Natural killer cell (primary cell): ENCODE measurements at regions of chr1 and their contacts with region 1.

Region 1: GRCh38 chr1:29793101-29793546 is 556.8 kb downstream of the PTPRU start:
- DNase-seq: peak; percentile 49 to 55
- ATAC-seq: peak; percentile 42 to 72 (median 57)
- H3K4me3 ChIP-seq: no peak overlapping the region
- H3K4me3 Mint-ChIP-seq: no peak overlapping the region
- H3K27ac ChIP-seq: no peak overlapping the region
- H3K27ac Mint-ChIP-seq: no peak overlapping the region
- H3K4me1 ChIP-seq: no peaks in the 10 kb centered on the region
- H3K4me1 Mint-ChIP-seq: no peaks in the 10 kb centered on the region
- H3K27me3 ChIP-seq: no peaks in the 10 kb centered on the region
- H3K27me3 Mint-ChIP-seq: no peaks in the 10 kb centered on the region
- CTCF ChIP-seq: peak; percentile 64

Region 2: DNA sequence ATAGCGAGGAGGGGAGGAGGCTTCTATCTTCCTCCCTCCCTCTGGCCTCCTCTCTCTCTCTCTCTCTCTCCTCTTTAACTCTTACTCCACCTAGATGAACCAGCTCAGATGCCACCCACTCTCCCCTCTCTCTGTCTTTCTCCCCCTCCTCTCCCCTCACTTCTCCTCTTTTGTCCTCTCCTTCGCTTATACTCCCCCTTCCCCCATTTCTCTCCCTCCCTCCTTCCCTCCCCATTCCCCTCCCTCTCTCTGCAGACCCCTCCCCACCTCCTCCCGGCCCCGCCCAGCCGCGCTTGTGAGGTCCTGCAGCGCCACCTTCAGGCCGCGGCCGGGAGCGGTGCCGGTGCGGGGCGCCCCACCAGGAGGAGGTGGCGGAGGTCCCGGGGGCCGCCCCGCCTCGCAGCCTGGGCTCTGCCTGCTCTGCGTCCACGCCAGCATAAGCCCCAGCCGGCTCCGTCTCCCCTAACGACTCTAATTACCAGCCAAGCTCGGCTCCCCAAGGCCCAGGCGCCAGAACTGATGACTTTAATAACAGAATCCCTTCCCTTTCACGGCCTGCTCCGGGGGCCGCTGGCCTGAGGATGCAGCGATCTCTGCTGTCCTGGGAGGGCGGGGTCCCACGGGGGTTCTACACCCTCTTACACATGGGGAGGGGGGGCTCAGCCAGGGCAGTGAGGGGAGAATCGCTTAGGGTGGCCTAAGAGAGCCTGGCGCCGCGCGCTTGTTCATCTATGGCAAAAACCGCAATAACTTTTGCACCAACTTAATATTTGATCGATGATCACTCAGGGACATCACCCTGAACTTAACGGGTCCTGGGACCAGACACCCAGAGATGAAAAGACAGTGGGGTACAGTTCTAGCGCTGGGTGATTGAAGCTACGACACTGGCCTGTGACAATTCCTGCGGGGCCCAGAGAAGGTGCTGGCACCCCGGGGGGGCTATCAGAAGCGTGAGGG is 293.0 kb after region 1 on chr1:
- intact Hi-C with region 1: loop called (anchors 5 kb)
- DNase-seq: peak; percentile 36 to 37
- ATAC-seq: peak in 2 of 3 donors; percentile 54 to 77
- H3K4me3 ChIP-seq: no peak overlapping the region
- H3K4me3 Mint-ChIP-seq: no peak overlapping the region
- H3K27ac ChIP-seq: no peak overlapping the region
- H3K27ac Mint-ChIP-seq: no peak overlapping the region
- H3K4me1 ChIP-seq: no peaks in the 10 kb centered on the region
- H3K4me1 Mint-ChIP-seq: peaks cover 0 to 10% of the 10 kb centered on the region in 2 donors
- H3K27me3 ChIP-seq: no peaks in the 10 kb centered on the region
- H3K27me3 Mint-ChIP-seq: peaks cover 26 to 32% of the 10 kb centered on the region in 2 donors
- CTCF ChIP-seq: peak; percentile 48

Region 3: GRCh38 chr1:30315185-30315960 is 522.2 kb after region 1 on chr1:
- intact Hi-C with region 1: no loop called
- DNase-seq: peak; percentile 1 to 11
- ATAC-seq: no peak
- H3K4me3 ChIP-seq: no peak overlapping the region
- H3K4me3 Mint-ChIP-seq: no peak overlapping the region
- H3K27ac ChIP-seq: no peak overlapping the region
- H3K27ac Mint-ChIP-seq: no peak overlapping the region
- H3K4me1 ChIP-seq: no peaks in the 10 kb centered on the region
- H3K4me1 Mint-ChIP-seq: no peaks in the 10 kb centered on the region
- H3K27me3 ChIP-seq: no peaks in the 10 kb centered on the region
- H3K27me3 Mint-ChIP-seq: peaks cover 6 to 12% of the 10 kb centered on the region in 2 donors
- CTCF ChIP-seq: no peak

Region 4: GRCh38 chr1:30379684-30380624 is 586.8 kb after region 1 on chr1:
- intact Hi-C with region 1: loop called (anchors 2 kb)
- DNase-seq: peak; percentile 16 to 81
- ATAC-seq: peak; percentile 61 to 81 (median 61)
- H3K4me3 ChIP-seq: no peak overlapping the region
- H3K4me3 Mint-ChIP-seq: no peak overlapping the region
- H3K27ac ChIP-seq: no peak overlapping the region
- H3K27ac Mint-ChIP-seq: no peak overlapping the region
- H3K4me1 ChIP-seq: no peaks in the 10 kb centered on the region
- H3K4me1 Mint-ChIP-seq: peaks cover 0 to 13% of the 10 kb centered on the region in 2 donors
- H3K27me3 ChIP-seq: peaks cover 2% of the 10 kb centered on the region
- H3K27me3 Mint-ChIP-seq: peaks cover 0 to 10% of the 10 kb centered on the region in 2 donors
- CTCF ChIP-seq: peak; percentile 80